Activated naive CD4-positive, alpha-beta T cell treated with anti-CD3 and anti-CD28 coated beads for 36 hours (primary cell): ENCODE measurements at regions of chr2 and their contacts with region 1.

Region 1: GRCh38 chr2:143110758-143111428 is 18.3 kb upstream of the ARHGAP15 start:
- DNase-seq: peak; percentile 82
- H3K4me3 Mint-ChIP-seq: peak overlapping the region; percentile 59
- H3K27ac Mint-ChIP-seq: peak overlapping the region; percentile 90
- H3K4me1 Mint-ChIP-seq: peaks cover 46% of the 10 kb centered on the region
- H3K27me3 Mint-ChIP-seq: no peaks in the 10 kb centered on the region

Region 2: DNA sequence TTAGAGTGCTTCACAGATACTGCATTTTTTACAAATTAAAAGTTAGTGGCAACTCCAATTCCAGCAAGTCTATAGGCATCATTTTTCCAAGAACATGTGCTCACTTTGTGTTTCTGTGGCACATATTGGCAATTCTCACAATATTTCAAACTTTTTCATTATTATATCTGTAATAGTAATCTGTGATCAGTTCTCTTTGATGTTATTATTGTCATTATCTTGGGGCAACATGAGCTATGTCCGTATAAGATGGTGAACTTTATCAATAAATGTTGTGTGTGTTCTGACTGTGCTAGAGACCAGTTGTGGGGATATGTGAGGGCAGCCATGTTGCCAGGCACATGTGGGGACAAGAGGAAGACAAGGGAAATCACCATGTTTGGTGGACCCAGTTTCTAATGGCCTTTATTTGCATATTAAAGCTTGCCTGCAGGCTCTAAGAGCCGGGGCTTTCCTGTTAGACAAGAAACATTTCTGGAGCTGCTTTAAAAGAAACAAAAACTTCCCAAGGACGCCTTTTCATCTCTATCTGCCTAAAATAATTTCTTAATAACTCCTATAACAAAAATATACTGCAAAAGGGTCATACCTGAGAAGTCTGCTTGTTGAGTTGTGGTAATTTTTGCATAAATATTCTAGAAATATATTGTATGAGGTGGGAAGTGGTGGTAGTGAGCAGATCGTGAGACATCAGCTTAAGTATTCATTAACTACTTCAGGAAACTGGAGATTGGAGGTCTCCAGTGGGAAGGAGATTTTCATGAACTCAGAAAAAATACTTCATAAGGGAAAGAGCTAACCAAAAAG is 196.2 kb before region 1 on chr2:
- CTCF ChIA-PET with region 1: no interaction called
- intact Hi-C with region 1: no loop called
- DNase-seq: no peak
- H3K4me3 Mint-ChIP-seq: no peak overlapping the region
- H3K27ac Mint-ChIP-seq: no peak overlapping the region
- H3K4me1 Mint-ChIP-seq: no peaks in the 10 kb centered on the region
- H3K27me3 Mint-ChIP-seq: no peaks in the 10 kb centered on the region

Region 3: GRCh38 chr2:143083636-143084035 is 27.3 kb before region 1 on chr2:
- CTCF ChIA-PET with region 1: interaction called, 3 read pairs
- intact Hi-C with region 1: loop called (anchors 1 kb)
- DNase-seq: peak; percentile 15
- H3K4me3 Mint-ChIP-seq: no peak overlapping the region
- H3K27ac Mint-ChIP-seq: no peak overlapping the region
- H3K4me1 Mint-ChIP-seq: peaks cover 27% of the 10 kb centered on the region
- H3K27me3 Mint-ChIP-seq: no peaks in the 10 kb centered on the region

Region 4: DNA sequence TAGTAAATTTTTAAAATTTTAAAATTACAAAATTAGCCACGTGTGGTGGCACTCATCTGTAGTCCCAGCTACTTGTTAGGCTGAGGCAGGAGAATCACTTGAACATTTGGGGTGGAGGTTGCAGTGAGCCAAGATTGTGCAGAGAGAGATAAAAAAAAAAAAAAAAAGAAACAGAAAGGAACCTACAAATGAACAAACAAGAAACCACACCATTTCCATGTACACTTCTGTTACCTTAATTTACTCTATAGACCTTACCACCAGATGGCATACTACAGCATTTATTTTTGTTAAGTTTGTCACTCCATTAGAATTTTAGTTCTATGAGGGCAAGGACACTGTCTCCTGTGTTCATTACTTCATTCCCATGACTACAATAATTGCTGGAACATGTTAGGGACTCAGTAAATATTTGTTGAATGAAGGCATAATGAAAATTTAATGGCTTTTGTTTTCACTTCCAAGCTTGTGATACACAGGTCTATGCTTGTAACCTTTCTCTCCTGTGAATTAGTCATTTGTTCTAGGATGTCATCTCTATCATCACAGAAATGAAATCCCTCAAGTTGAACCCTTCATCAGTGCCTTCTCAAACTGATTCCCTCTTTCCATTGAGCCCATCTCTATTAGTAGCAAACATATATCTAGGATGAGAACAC is 94.3 kb after region 1 on chr2:
- CTCF ChIA-PET with region 1: interaction called, 11 read pairs
- intact Hi-C with region 1: no loop called
- DNase-seq: no peak
- H3K4me3 Mint-ChIP-seq: no peak overlapping the region
- H3K27ac Mint-ChIP-seq: peak overlapping the region; percentile 78
- H3K4me1 Mint-ChIP-seq: peaks cover 53% of the 10 kb centered on the region
- H3K27me3 Mint-ChIP-seq: no peaks in the 10 kb centered on the region

Region 5: DNA sequence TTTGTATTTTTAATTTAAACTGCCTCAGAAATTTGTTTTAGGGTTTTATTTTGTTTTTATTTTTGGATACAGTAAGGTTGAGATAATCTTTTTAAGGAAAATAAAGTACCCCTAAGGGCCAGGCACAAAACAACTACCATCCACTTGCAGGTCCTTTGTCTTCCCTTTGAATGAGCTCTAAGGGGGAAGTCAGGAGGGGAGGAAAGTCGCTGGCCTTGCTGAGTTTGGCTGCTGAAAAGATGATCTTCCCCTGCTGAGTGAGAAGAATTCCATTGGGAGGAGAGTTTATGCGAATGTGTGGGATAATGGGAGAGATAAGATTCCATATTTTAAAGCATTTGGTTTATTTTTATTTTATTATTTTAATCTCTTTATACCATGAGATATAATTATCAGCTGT is 119.1 kb after region 1 on chr2:
- CTCF ChIA-PET with region 1: interaction called, 72 read pairs
- intact Hi-C with region 1: no loop called
- DNase-seq: no peak
- H3K4me3 Mint-ChIP-seq: no peak overlapping the region
- H3K27ac Mint-ChIP-seq: no peak overlapping the region
- H3K4me1 Mint-ChIP-seq: peaks cover 20% of the 10 kb centered on the region
- H3K27me3 Mint-ChIP-seq: no peaks in the 10 kb centered on the region

Region 6: DNA sequence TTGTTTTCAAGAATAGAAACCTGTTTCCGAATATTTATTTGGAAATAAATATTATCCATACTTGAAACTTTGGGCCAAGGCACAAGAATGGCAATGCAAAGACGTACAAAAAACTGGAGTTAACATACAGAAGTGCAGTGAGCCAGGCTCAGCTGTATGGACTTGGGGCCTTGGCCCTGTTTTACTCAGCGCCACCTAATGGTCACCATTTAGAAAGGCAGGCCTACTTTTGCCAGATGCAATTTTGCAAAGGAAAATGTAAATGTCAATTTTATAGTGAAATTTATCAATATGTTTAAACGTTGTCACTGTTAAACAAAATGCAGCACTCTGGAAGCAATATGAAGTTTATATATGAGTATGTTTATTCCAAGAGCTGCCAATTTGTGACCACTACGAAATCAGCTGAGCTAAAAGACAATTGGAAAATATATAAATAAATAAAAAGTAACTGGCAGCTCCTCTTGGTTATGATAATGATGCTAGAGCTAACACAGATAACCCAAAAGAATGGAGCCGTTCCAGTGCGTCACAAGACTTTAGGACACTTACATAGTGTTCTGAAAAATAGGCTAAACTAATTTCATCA is 173.3 kb after region 1 on chr2:
- CTCF ChIA-PET with region 1: interaction called, 10 read pairs
- intact Hi-C with region 1: loop called (anchors 1 kb)
- DNase-seq: peak; percentile 38
- H3K4me3 Mint-ChIP-seq: no peak overlapping the region
- H3K27ac Mint-ChIP-seq: no peak overlapping the region
- H3K4me1 Mint-ChIP-seq: peaks cover 48% of the 10 kb centered on the region
- H3K27me3 Mint-ChIP-seq: no peaks in the 10 kb centered on the region